ENCODE measurements at regions of chr17 and their contacts with region 1.

Region 1: DNA sequence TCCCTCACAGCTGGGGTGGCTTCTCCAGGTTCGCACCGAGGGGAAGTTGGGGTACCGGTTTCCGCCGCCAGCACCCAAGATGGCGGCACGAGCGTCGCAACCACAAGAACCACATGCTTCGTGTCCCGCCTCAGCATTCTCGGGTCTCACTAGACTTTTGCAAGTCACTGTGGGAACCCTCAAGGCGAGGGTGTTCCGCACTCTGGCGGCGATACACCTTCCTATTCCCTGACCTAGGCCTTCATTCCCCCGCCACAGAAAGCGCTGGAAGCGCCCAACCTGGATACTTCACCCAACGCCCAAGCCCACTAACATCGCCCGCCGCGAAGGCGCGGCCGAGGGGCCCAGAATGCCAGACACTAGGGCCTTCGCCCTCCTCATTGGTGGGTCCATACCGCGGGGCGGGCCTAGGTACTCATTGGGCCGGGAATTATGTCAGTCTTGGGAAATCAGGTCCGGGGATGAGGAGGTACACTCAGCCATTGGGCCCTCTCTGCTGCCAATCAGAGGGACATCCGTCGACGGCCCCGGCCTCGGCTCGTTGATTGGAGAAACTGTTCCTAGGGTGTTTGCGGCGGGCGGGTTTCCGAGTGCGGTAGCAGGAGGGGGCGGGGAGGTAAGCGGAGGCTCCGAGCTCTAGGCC is at the start of gene NFE2L1:
- DNase-seq: peak; percentile 99
- H3K4me3 ChIP-seq: peak within 1 kb of the TSS; percentile 94
- H3K27ac ChIP-seq: peak within 1 kb of the TSS; percentile 98
- H3K27me3 ChIP-seq: no peaks in the 10 kb centered on the region
- CTCF ChIP-seq: no peak
- polyA plus RNA-seq, gene NFE2L1: 237 and 251 TPM in 2 replicates

Region 2: GRCh38 chr17:48037036-48037837 is 10.6 kb before region 1 on chr17 and contains the start of gene COPZ2:
- CTCF ChIA-PET with region 1: interaction called, 11 read pairs
- POLR2A ChIA-PET with region 1: interaction called, 9 read pairs
- DNase-seq: no peak
- H3K4me3 ChIP-seq: peak within 1 kb of the TSS; percentile 70
- H3K27ac ChIP-seq: peak within 1 kb of the TSS; percentile 57
- H3K27me3 ChIP-seq: no peaks in the 10 kb centered on the region
- CTCF ChIP-seq: peak; percentile 57
- polyA plus RNA-seq, gene COPZ2: 107 and 122 TPM in 2 replicates

Region 3: DNA sequence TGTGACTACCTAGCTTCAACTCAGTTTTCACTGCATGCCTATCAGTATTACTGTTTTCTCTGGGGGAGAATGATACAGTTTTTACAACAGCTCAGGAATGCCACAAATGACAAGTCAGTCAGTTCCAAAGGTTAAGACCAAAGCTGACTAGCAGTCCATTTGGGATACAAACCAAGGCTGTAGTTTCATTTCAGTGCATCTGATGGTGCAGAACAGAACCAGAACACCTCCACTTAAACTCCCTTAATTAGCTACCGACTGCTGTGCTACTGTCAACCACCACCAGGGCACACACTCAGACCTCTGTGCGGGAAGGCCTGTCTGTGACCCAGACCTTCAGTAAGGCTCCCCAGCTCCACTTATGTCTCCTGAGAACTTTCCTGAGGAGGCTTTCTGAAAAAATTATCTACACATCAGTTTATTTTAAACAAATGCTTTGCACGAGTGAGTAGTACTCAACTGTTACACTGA is 20.7 kb after region 1 on chr17:
- CTCF ChIA-PET with region 1: interaction called, 9 read pairs
- POLR2A ChIA-PET with region 1: interaction called, 16 read pairs
- DNase-seq: no peak
- H3K4me3 ChIP-seq: no peak overlapping the region
- H3K27ac ChIP-seq: no peak overlapping the region
- H3K27me3 ChIP-seq: no peaks in the 10 kb centered on the region
- CTCF ChIP-seq: peak; percentile 53

Region 4: GRCh38 chr17:48101012-48101720 is 53.3 kb after region 1 on chr17 and contains the start of gene CBX1:
- CTCF ChIA-PET with region 1: interaction called, 8 read pairs
- POLR2A ChIA-PET with region 1: interaction called, 11 read pairs
- DNase-seq: peak; percentile 84
- H3K4me3 ChIP-seq: peak within 1 kb of the TSS; percentile 95
- H3K27ac ChIP-seq: peak within 1 kb of the TSS; percentile 86
- H3K27me3 ChIP-seq: no peaks in the 10 kb centered on the region
- CTCF ChIP-seq: no peak
- polyA plus RNA-seq, gene CBX1: 57.2 and 68.2 TPM in 2 replicates

Measured in AG04450 (cell line).